ENCODE measurements at regions of chr7 and their contacts with region 1.

Region 1: GRCh38 chr7:142811154-142811737 is 40.5 kb downstream of the PRSS2 start:
- DNase-seq: peak; percentile 63
- H3K4me3 ChIP-seq: no peak overlapping the region
- H3K27ac ChIP-seq: no peak overlapping the region
- H3K4me1 ChIP-seq: peaks cover 50% of the 10 kb centered on the region
- H3K27me3 ChIP-seq: no peaks in the 10 kb centered on the region
- CTCF ChIP-seq: peak; percentile 39 to 59
- POLR2A ChIP-seq: no peak

Region 2: GRCh38 chr7:142568435-142569097 is 242.7 kb before region 1 on chr7:
- CTCF ChIA-PET with region 1: no interaction called
- POLR2A ChIA-PET with region 1: no interaction called
- dilution Hi-C with region 1: no loop called
- intact Hi-C with region 1: loop called (anchors 1 kb)
- DNase-seq: peak; percentile 80
- H3K4me3 ChIP-seq: no peak overlapping the region
- H3K27ac ChIP-seq: peak overlapping the region; percentile 44
- H3K4me1 ChIP-seq: peaks cover 27% of the 10 kb centered on the region
- H3K27me3 ChIP-seq: no peaks in the 10 kb centered on the region
- CTCF ChIP-seq: no peak
- POLR2A ChIP-seq: peak; percentile 41

Region 3: GRCh38 chr7:142632291-142633134 is 178.7 kb before region 1 on chr7:
- CTCF ChIA-PET with region 1: interaction called, 104 read pairs
- POLR2A ChIA-PET with region 1: no interaction called
- dilution Hi-C with region 1: no loop called
- intact Hi-C with region 1: loop called (anchors 1 kb)
- DNase-seq: peak; percentile 74
- H3K4me3 ChIP-seq: no peak overlapping the region
- H3K27ac ChIP-seq: no peak overlapping the region
- H3K4me1 ChIP-seq: no peaks in the 10 kb centered on the region
- H3K27me3 ChIP-seq: peaks cover 1 to 3% of the 10 kb centered on the region in 2 experiments
- CTCF ChIP-seq: peak; percentile 69 to 73
- POLR2A ChIP-seq: no peak

Region 4: DNA sequence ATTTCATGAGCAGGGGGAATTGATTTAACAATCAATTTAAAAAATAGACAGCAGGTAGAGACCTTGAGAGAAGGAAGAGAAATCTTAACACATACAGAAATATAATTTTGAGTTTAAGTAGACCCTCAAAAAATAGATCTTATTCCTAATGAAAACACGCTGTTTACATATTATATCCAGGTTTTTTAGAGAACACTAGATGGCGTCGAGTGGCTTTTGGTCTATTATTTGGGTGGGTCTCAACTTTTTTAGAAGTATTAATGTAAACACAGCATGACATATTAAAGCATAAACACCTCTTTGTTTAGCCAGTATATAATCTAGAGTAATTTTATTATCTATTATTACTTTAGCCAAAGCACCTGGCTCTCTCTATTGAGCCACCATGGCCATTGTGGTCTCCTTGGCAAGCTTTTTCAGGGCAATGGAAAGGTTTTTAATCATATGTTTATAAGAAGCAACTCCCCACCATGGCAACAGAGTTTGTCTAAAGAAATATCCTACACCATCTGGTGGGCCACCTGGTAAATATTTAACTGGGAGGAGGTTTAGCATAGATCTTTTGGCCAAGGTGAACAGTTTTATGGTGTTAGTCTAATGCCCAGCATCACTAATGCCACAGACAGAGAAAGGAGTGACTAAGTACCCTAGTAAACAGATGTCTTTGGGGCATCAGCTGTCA is 121.7 kb before region 1 on chr7:
- CTCF ChIA-PET with region 1: interaction called, 3 read pairs
- POLR2A ChIA-PET with region 1: no interaction called
- dilution Hi-C with region 1: no loop called
- intact Hi-C with region 1: loop called (anchors 1 kb)
- DNase-seq: peak; percentile 23
- H3K4me3 ChIP-seq: no peak overlapping the region
- H3K27ac ChIP-seq: no peak overlapping the region
- H3K4me1 ChIP-seq: no peaks in the 10 kb centered on the region
- H3K27me3 ChIP-seq: peaks cover 6 to 13% of the 10 kb centered on the region in 2 experiments
- CTCF ChIP-seq: no peak
- POLR2A ChIP-seq: no peak

Region 5: GRCh38 chr7:142796608-142797385 is 14.4 kb before region 1 on chr7:
- CTCF ChIA-PET with region 1: interaction called, 425 read pairs
- POLR2A ChIA-PET with region 1: interaction called, 7 read pairs
- dilution Hi-C with region 1: no loop called
- intact Hi-C with region 1: loop called (anchors 1 kb)
- DNase-seq: no peak
- H3K4me3 ChIP-seq: peak overlapping the region; percentile 62 to 76 (median 69)
- H3K27ac ChIP-seq: peak overlapping the region; percentile 63
- H3K4me1 ChIP-seq: peaks cover 28% of the 10 kb centered on the region
- H3K27me3 ChIP-seq: no peaks in the 10 kb centered on the region
- CTCF ChIP-seq: no peak
- POLR2A ChIP-seq: no peak

Region 6: DNA sequence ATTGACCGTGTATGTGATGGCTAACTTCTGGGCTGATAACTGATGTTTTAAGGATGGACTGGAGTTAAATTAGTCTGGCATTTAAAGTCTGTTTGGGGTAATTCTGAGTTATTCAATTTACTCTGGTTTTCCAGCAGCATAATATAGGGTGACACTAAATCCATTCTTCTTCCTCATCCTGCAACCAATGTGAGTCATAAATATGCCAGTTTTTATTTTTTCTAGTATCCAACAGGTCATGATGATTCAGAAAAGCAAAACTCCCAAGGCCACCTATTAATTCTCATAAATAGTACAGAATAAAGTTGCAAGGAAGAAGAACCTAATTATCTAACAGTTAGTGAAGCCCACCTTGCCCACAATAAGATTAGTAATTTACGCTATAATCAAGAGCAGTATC is 36.1 kb after region 1 on chr7:
- CTCF ChIA-PET with region 1: no interaction called
- POLR2A ChIA-PET with region 1: no interaction called
- dilution Hi-C with region 1: no loop called
- intact Hi-C with region 1: no loop called
- DNase-seq: no peak
- H3K4me3 ChIP-seq: no peak overlapping the region
- H3K27ac ChIP-seq: no peak overlapping the region
- H3K4me1 ChIP-seq: peaks cover 5% of the 10 kb centered on the region
- H3K27me3 ChIP-seq: peaks cover 2 to 5% of the 10 kb centered on the region in 2 experiments
- CTCF ChIP-seq: no peak
- POLR2A ChIP-seq: no peak

Region 7: GRCh38 chr7:143069912-143070500 is 258.8 kb after region 1 on chr7:
- CTCF ChIA-PET with region 1: no interaction called
- POLR2A ChIA-PET with region 1: no interaction called
- dilution Hi-C with region 1: no loop called
- intact Hi-C with region 1: no loop called
- DNase-seq: no peak
- H3K4me3 ChIP-seq: no peak overlapping the region
- H3K27ac ChIP-seq: no peak overlapping the region
- H3K4me1 ChIP-seq: no peaks in the 10 kb centered on the region
- H3K27me3 ChIP-seq: no peaks in the 10 kb centered on the region
- CTCF ChIP-seq: no peak
- POLR2A ChIP-seq: no peak

Measured in endothelial cell of umbilical vein (primary cell).